ENCODE measurements at regions of chr19 and their contacts with region 1.

Region 1: DNA sequence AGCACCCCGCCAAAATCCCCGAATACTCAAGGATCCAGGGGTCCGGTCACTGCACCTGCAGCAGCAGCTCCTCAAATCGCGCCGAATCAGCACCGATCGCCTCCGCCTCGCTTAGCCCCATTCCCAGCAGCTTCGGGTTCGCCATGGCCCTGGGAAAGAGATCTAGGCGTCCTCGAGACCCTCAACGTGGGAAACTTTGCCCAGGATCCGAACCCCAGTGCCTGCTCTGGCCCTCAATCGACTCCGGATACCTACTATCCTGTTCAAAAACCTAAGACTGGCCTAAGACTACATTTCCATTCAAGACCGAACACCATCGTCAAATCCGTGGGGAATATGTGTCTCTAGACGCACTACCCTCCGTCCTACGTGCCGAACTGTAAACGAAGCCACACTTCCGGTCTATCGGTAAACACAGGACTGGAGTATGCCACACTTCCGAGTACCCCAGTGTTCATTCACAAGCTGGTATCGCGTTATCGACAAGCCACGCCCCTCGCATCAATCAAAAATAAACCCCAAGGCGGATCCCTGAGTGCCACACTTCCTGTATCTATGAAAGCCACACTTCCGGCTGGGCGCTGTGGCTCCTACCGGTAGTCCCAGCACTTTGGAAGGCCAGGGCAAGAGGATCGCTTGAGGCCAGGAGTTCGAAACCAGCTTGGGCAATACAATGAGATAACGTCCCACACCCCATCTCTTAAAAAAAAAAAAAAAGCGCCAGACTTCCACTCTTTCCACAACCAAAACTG is at the start of gene PIH1D1:
- DNase-seq: peak; percentile 94 to 98 (median 97)
- ATAC-seq: peak; percentile 73 to 85 (median 84)
- H3K4me3 ChIP-seq: peak within 1 kb of the TSS; percentile 25 to 88 (median 71)
- H3K27ac ChIP-seq: peak within 1 kb of the TSS; percentile 86 to 99 (median 96)
- H3K4me1 ChIP-seq: peaks cover 0 to 32% (median 11%) of the 10 kb centered on the region in 12 donors
- H3K27me3 ChIP-seq: no peaks in the 10 kb centered on the region
- CTCF ChIP-seq: peak in 6 of 12 donors; percentile 5 to 28 (median 24)
- POLR2A ChIP-seq: peak in 1 of 2 donors; percentile 54
- total RNA-seq, gene PIH1D1: 16.3 to 49.9 (median 31.1) TPM

Region 2: GRCh38 chr19:49363268-49364082 is 88.1 kb before region 1 on chr19 and contains the start of gene DKKL1:
- intact Hi-C with region 1: no loop called
- DNase-seq: peak; percentile 98 to 100 (median 99)
- ATAC-seq: peak; percentile 88 to 95 (median 92)
- H3K4me3 ChIP-seq: peak within 1 kb of the TSS; percentile 16 to 97 (median 89)
- H3K27ac ChIP-seq: peak within 1 kb of the TSS; percentile 93 to 99 (median 98)
- H3K4me1 ChIP-seq: peaks cover 0 to 23% (median 7%) of the 10 kb centered on the region in 12 donors
- H3K27me3 ChIP-seq: peaks cover 0 to 12% (median 0%) of the 10 kb centered on the region in 9 donors
- CTCF ChIP-seq: peak in 7 of 12 donors; percentile 12 to 45 (median 26)
- POLR2A ChIP-seq: peak in 1 of 2 donors; percentile 69
- total RNA-seq, gene DKKL1: 0.51 TPM in 1 of 9 donors, not detected in the others

Region 3: GRCh38 chr19:49378512-49378911 is 73.1 kb before region 1 on chr19:
- intact Hi-C with region 1: no loop called
- DNase-seq: no peak
- ATAC-seq: no peak
- H3K4me3 ChIP-seq: no peak overlapping the region
- H3K27ac ChIP-seq: no peak overlapping the region
- H3K4me1 ChIP-seq: no peaks in the 10 kb centered on the region
- H3K27me3 ChIP-seq: peaks cover 0 to 4% (median 0%) of the 10 kb centered on the region in 9 donors
- CTCF ChIP-seq: no peak
- POLR2A ChIP-seq: no peak

Region 4: GRCh38 chr19:49468746-49469447 is 17.3 kb after region 1 on chr19:
- intact Hi-C with region 1: loop called in 1 of 10 experiments (anchors 2 kb)
- DNase-seq: peak; percentile 74 to 92 (median 86)
- ATAC-seq: peak; percentile 76 to 94 (median 89)
- H3K4me3 ChIP-seq: no peak overlapping the region
- H3K27ac ChIP-seq: peak overlapping the region; percentile 47 to 85 (median 76)
- H3K4me1 ChIP-seq: peaks cover 0 to 45% (median 19%) of the 10 kb centered on the region in 12 donors
- H3K27me3 ChIP-seq: peaks cover 0 to 1% (median 0%) of the 10 kb centered on the region in 9 donors
- CTCF ChIP-seq: no peak
- POLR2A ChIP-seq: peak in 1 of 2 donors; percentile 47

Region 5: DNA sequence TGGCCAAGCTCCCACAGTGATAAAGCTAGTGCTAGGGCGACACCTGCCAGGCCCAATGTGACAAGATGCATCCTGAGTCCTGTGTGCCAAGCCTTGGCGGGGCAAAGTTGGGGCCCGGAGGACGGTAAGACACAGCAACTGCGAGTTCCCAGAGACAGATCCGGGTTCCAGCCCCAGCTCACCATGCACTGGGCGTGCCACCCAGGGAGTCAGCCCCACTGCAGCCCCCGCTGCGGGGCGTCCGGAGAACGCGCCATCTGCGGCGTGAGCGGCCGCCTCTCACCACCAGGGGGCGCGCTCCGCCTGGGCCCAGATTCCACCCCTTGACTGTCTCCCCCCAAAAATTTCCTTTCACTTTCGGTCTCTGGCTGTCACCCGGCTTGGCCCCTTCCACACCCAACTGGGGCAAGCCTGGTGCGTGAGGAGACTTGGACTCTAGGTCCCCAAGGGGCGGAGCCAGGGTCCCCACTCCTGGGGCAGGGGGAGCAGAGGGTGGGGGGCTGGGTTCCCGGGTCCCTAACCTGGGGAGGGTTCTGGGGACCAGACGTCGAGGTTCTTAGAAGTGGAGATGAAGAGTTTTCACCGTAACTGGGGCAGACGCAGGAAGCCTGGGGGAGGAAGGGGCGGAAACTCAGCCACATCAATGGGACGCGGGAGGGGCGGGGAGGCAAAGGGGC is 22.4 kb after region 1 on chr19 and contains the start of gene FLT3LG:
- intact Hi-C with region 1: loop called in 2 of 10 experiments (anchors 2 kb)
- DNase-seq: peak; percentile 74 to 90 (median 83)
- ATAC-seq: peak; percentile 44 to 79 (median 65)
- H3K4me3 ChIP-seq: peak within 1 kb of the TSS; percentile 33 to 93 (median 68)
- H3K27ac ChIP-seq: peak within 1 kb of the TSS; percentile 76 to 96 (median 90)
- H3K4me1 ChIP-seq: peaks cover 0 to 57% (median 13%) of the 10 kb centered on the region in 12 donors
- H3K27me3 ChIP-seq: peaks cover 0 to 6% (median 0%) of the 10 kb centered on the region in 9 donors
- CTCF ChIP-seq: peak; percentile 96 to 100 (median 99)
- POLR2A ChIP-seq: peak in 1 of 2 donors; percentile 41
- total RNA-seq, gene FLT3LG: 1.7 to 13.4 (median 2.4) TPM

Region 6: DNA sequence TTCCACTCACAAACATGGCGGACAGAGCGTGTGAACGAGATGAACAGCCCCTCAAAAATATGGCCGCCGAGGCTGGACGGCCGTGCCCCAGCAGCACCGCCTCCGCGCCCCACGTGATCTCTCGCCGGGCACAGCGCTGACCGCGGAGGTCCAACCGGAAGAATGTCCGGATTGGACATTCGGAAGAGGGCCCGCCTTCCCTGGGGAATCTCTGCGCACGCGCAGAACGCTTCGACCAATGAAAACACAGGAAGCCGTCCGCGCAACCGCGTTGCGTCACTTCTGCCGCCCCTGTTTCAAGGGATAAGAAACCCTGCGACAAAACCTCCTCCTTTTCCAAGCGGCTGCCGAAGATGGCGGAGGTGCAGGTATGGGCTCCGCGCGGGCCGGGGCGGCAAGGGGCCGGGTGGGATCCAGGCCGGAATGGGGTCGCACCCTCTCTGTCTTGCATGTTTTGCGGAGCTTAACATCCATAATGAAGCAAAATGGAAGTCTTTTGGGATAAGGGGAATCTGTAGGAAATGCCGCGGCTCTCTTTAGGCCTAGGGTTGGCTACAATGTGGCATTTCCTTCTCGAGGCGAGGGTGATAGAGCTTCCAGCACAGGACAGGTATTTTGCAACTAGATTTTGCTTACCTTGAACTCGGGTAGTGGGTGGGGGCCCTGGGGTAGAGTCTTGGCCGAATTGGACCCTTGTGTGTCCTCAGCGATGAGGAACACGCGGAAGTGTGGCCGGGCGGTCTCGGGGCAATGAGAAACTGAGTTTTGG is 35.9 kb after region 1 on chr19 and contains the start of gene RPL13A:
- intact Hi-C with region 1: loop called in 1 of 10 experiments (anchors 2 kb)
- DNase-seq: peak; percentile 100
- ATAC-seq: peak; percentile 96 to 98 (median 97)
- H3K4me3 ChIP-seq: peak within 1 kb of the TSS; percentile 69 to 98 (median 88)
- H3K27ac ChIP-seq: peak within 1 kb of the TSS; percentile 75 to 93 (median 90)
- H3K4me1 ChIP-seq: peaks cover 6 to 49% (median 23%) of the 10 kb centered on the region in 12 donors
- H3K27me3 ChIP-seq: no peaks in the 10 kb centered on the region
- CTCF ChIP-seq: no peak
- POLR2A ChIP-seq: peak; percentile 24 to 97
- total RNA-seq, gene RPL13A: 876 to 1,739 (median 1,261) TPM

Region 7: DNA sequence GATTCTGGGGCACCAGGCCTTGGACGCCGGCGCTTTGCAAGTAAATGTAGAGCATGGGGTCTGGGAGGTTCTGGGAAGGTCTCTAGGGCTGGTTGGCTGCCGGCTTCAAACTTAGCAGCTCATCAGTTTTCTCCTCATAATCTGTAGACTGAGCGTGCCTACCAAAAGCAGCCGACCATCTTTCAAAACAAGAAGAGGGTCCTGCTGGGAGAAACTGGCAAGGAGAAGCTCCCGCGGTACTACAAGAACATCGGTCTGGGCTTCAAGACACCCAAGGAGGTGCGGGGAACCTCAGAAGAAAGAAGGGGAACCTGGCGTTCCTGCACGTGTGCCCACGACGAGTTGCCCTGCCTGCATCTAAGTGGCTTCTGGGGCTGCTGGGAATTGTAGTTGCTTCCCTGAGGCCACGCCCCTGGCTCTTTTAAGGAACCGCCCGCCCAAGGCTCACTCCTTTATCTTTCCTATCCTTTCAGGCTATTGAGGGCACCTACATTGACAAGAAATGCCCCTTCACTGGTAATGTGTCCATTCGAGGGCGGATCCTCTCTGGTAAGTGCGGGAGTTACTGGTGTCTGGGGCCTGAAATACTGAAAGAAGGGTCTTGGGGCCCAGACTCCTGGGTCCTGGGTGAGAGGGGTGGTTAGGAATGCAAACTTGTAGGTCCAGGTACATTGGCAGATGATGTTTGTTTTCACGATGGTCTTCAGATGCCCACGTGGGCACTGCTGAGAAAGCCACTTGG is 45.6 kb after region 1 on chr19:
- intact Hi-C with region 1: loop called in 1 of 10 experiments (anchors 1 kb)
- DNase-seq: peak in 4 of 5 donors; percentile 63 to 76 (median 67)
- ATAC-seq: no peak
- H3K4me3 ChIP-seq: peak overlapping the region; percentile 80 to 98 (median 90)
- H3K27ac ChIP-seq: peak overlapping the region in 11 of 12 donors; percentile 89 to 99 (median 96)
- H3K4me1 ChIP-seq: peaks cover 14 to 56% (median 41%) of the 10 kb centered on the region in 12 donors
- H3K27me3 ChIP-seq: no peaks in the 10 kb centered on the region
- CTCF ChIP-seq: no peak
- POLR2A ChIP-seq: no peak

Region 8: GRCh38 chr19:49614096-49614833 is 162.7 kb after region 1 on chr19:
- intact Hi-C with region 1: no loop called
- DNase-seq: no peak
- ATAC-seq: peak in 2 of 4 donors; percentile 14 to 18
- H3K4me3 ChIP-seq: no peak overlapping the region
- H3K27ac ChIP-seq: no peak overlapping the region
- H3K4me1 ChIP-seq: peaks cover 0 to 17% (median 2%) of the 10 kb centered on the region in 12 donors
- H3K27me3 ChIP-seq: no peaks in the 10 kb centered on the region
- CTCF ChIP-seq: no peak
- POLR2A ChIP-seq: no peak

Region 9: GRCh38 chr19:49640113-49640898 is 188.7 kb after region 1 on chr19 and contains the start of gene RRAS:
- intact Hi-C with region 1: loop called in 1 of 10 experiments (anchors 5 kb)
- DNase-seq: peak; percentile 99 to 100 (median 100)
- ATAC-seq: peak; percentile 75 to 81 (median 78)
- H3K4me3 ChIP-seq: peak within 1 kb of the TSS; percentile 77 to 100 (median 92)
- H3K27ac ChIP-seq: peak within 1 kb of the TSS; percentile 98 to 100 (median 100)
- H3K4me1 ChIP-seq: peaks cover 3 to 77% (median 53%) of the 10 kb centered on the region in 12 donors
- H3K27me3 ChIP-seq: no peaks in the 10 kb centered on the region
- CTCF ChIP-seq: no peak
- POLR2A ChIP-seq: peak; percentile 43 to 83
- total RNA-seq, gene RRAS: 64.4 to 149 (median 110) TPM

Region 10: GRCh38 chr19:49877020-49877878 is 425.6 kb after region 1 on chr19 and contains the starts of genes AKT1S1 and TBC1D17:
- intact Hi-C with region 1: loop called in 1 of 10 experiments (anchors 2 kb)
- DNase-seq: peak; percentile 99 to 100 (median 99)
- ATAC-seq: peak; percentile 84 to 90 (median 87)
- H3K4me3 ChIP-seq: peak within 1 kb of the TSS; percentile 72 to 99 (median 87)
- H3K27ac ChIP-seq: peak within 1 kb of the TSS; percentile 96 to 100 (median 98)
- H3K4me1 ChIP-seq: peaks cover 0 to 30% (median 19%) of the 10 kb centered on the region in 12 donors
- H3K27me3 ChIP-seq: no peaks in the 10 kb centered on the region
- CTCF ChIP-seq: no peak
- POLR2A ChIP-seq: peak; percentile 58 to 70
- total RNA-seq, gene AKT1S1: 25.3 to 46.0 (median 31.2) TPM
- total RNA-seq, gene TBC1D17: 30.1 to 54.8 (median 39.8) TPM